Endothelial cell of umbilical vein (primary cell): ENCODE measurements at regions of chr2 and their contacts with region 1.

Region 1: DNA sequence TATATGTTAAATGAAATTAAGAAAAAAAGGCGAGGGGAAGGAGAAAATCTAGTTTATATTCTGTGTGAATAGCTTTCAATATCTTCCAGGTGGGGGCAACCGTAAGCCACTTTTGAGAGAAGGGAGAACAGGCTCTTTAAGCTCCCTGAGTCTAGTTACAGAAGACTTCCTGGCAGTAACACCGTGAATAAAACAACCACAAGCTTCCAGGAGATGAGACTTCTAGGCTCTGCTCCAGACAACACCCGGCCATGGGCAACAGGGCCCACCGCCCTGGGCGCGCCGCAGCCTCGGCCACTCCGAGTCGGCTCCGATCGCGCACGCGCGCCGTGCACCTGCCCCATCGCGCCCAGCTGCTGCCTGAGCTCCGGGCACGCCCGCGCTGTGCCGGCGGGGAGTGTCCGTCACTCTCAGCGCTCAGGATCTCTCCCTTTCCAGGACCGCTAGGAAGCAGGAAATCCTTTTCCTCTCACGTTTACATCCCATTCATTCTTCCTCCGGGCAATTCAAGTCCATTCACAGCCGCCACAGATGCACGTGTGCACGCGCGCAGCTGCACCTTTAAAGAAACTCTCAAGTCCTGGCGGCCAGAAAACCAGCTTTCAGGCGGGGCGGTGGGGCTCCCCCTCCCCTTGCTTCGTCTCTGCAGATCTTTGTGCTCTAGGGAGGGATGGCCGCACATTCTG is 19.4 kb upstream of the PAX3 start:
- DNase-seq: peak; percentile 76
- H3K4me3 ChIP-seq: peak overlapping the region; percentile 8 to 61 (median 44)
- H3K27ac ChIP-seq: no peak overlapping the region
- H3K4me1 ChIP-seq: peaks cover 16% of the 10 kb centered on the region
- H3K27me3 ChIP-seq: peaks cover 52 to 81% of the 10 kb centered on the region in 2 experiments
- CTCF ChIP-seq: peak; percentile 24 to 39
- POLR2A ChIP-seq: no peak

Region 2: GRCh38 chr2:222057347-222058073 is 260.7 kb before region 1 on chr2:
- CTCF ChIA-PET with region 1: interaction called, 3 read pairs
- POLR2A ChIA-PET with region 1: no interaction called
- dilution Hi-C with region 1: no loop called
- intact Hi-C with region 1: loop called (anchors 2 kb)
- DNase-seq: peak; percentile 8
- H3K4me3 ChIP-seq: no peak overlapping the region
- H3K27ac ChIP-seq: no peak overlapping the region
- H3K4me1 ChIP-seq: no peaks in the 10 kb centered on the region
- H3K27me3 ChIP-seq: peaks cover 3 to 10% of the 10 kb centered on the region in 2 experiments
- CTCF ChIP-seq: peak; percentile 23 to 40
- POLR2A ChIP-seq: no peak

Region 3: GRCh38 chr2:222193325-222193983 is 124.7 kb before region 1 on chr2:
- CTCF ChIA-PET with region 1: no interaction called
- POLR2A ChIA-PET with region 1: no interaction called
- dilution Hi-C with region 1: no loop called
- intact Hi-C with region 1: no loop called
- DNase-seq: no peak
- H3K4me3 ChIP-seq: no peak overlapping the region
- H3K27ac ChIP-seq: no peak overlapping the region
- H3K4me1 ChIP-seq: no peaks in the 10 kb centered on the region
- H3K27me3 ChIP-seq: no peaks in the 10 kb centered on the region
- CTCF ChIP-seq: no peak
- POLR2A ChIP-seq: no peak

Region 4: GRCh38 chr2:222399038-222399783 is 81.0 kb after region 1 on chr2:
- CTCF ChIA-PET with region 1: interaction called, 10 read pairs
- POLR2A ChIA-PET with region 1: no interaction called
- dilution Hi-C with region 1: no loop called
- intact Hi-C with region 1: no loop called
- DNase-seq: no peak
- H3K4me3 ChIP-seq: no peak overlapping the region
- H3K27ac ChIP-seq: no peak overlapping the region
- H3K4me1 ChIP-seq: no peaks in the 10 kb centered on the region
- H3K27me3 ChIP-seq: no peaks in the 10 kb centered on the region
- CTCF ChIP-seq: no peak
- POLR2A ChIP-seq: no peak

Region 5: DNA sequence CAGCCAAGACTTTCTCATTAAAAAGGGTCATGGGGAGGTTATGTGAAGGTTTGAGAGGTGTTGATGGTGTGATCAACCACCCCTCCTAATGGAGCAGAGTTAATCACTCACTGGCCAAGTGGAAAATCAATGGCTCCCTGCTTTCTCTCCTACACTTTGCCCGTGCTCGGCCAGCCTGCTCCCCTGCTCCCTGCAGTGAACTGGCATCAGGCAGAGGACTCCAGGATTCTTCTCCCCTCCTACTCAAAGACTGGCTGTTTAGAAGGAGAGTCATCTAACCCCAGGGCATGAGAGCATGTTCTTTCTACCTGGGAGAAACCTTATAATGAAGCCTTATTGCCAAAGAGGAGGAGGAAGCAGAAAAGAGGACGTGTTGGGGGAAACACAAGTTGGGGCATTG is 181.1 kb after region 1 on chr2:
- CTCF ChIA-PET with region 1: no interaction called
- POLR2A ChIA-PET with region 1: no interaction called
- dilution Hi-C with region 1: no loop called
- intact Hi-C with region 1: no loop called
- DNase-seq: no peak
- H3K4me3 ChIP-seq: no peak overlapping the region
- H3K27ac ChIP-seq: no peak overlapping the region
- H3K4me1 ChIP-seq: no peaks in the 10 kb centered on the region
- H3K27me3 ChIP-seq: no peaks in the 10 kb centered on the region
- CTCF ChIP-seq: no peak
- POLR2A ChIP-seq: no peak

Region 6: GRCh38 chr2:222554517-222554916 is 236.3 kb after region 1 on chr2:
- CTCF ChIA-PET with region 1: interaction called, 312 read pairs
- POLR2A ChIA-PET with region 1: no interaction called
- dilution Hi-C with region 1: no loop called
- intact Hi-C with region 1: no loop called
- DNase-seq: no peak
- H3K4me3 ChIP-seq: no peak overlapping the region
- H3K27ac ChIP-seq: no peak overlapping the region
- H3K4me1 ChIP-seq: no peaks in the 10 kb centered on the region
- H3K27me3 ChIP-seq: peaks cover 0 to 4% of the 10 kb centered on the region in 2 experiments
- CTCF ChIP-seq: no peak
- POLR2A ChIP-seq: no peak

Region 7: GRCh38 chr2:222582928-222583327 is 264.8 kb after region 1 on chr2:
- CTCF ChIA-PET with region 1: interaction called, 15 read pairs
- POLR2A ChIA-PET with region 1: no interaction called
- dilution Hi-C with region 1: no loop called
- intact Hi-C with region 1: no loop called
- DNase-seq: no peak
- H3K4me3 ChIP-seq: no peak overlapping the region
- H3K27ac ChIP-seq: no peak overlapping the region
- H3K4me1 ChIP-seq: no peaks in the 10 kb centered on the region
- H3K27me3 ChIP-seq: no peaks in the 10 kb centered on the region
- CTCF ChIP-seq: no peak
- POLR2A ChIP-seq: no peak

Region 8: DNA sequence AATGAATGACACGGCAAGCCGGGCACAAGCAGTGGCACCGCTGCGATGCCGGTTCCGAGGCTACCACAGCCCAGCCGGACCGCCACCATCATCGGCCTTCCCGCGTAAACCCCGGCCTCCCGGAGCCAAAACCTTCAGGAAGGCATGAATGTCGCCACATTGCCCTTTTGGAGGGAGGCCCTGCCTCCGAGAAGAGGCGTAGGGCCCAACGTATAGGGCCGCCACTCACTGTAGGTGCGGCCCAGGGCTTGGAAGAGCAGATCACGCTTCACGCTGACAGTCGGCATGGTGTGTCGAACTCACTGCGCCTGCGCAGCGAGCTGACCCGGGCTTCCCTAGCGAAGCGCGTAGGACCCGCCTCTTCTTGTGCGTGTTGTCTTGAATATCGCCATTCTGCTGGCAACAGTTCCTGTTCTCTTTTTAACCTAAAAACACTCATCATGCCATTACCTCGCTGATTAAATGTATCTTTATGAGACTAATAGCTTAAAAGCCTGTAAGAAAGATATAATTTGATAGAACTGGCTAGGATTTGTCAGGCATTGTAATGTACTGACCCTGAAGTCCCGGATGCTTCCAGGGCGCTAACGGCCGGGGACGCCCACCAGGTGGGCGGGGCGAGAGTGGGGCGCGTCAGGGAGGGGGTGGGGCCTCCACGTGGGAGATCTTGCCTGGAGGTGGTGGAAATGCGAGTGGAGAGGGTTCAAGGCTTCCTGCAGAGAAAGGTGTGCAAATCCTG is 337.8 kb after region 1 on chr2 and contains the start of gene FARSB:
- CTCF ChIA-PET with region 1: no interaction called
- POLR2A ChIA-PET with region 1: no interaction called
- dilution Hi-C with region 1: no loop called
- intact Hi-C with region 1: loop called (anchors 2 kb)
- DNase-seq: peak; percentile 97
- H3K4me3 ChIP-seq: peak within 1 kb of the TSS; percentile 47 to 95 (median 92)
- H3K27ac ChIP-seq: peak within 1 kb of the TSS; percentile 99
- H3K4me1 ChIP-seq: peaks cover 34% of the 10 kb centered on the region
- H3K27me3 ChIP-seq: no peaks in the 10 kb centered on the region
- CTCF ChIP-seq: no peak
- POLR2A ChIP-seq: peak; percentile 64
- total RNA-seq, gene FARSB: 27.2 and 29.4 TPM in 2 replicates